SK-N-SH (cell line): ENCODE measurements at regions of chr11 and their contacts with region 1.

Region 1: DNA sequence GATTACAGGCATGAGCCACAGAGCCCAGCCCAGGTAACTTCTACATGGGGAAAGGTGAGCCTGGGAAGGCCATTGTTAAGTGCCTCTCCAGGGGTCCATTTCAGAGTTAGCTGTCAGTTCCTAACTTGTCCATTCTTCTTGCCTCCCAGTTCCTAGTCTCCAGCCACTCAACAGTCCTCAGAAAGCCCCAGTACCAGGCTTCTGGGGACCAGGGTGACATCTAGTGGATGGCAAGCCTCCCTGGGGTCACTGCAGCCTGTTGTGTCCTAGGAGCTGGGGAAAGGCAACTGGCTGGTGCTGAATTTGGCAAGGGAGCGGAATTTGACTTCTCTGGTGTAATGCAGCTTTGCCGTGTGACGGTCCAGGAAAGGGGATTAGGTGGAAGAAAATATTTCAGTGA is 2.1 kb downstream of the LGALS12 start:
- DNase-seq: peak; percentile 37
- H3K4me3 ChIP-seq: no peak overlapping the region
- H3K27ac ChIP-seq: no peak overlapping the region
- H3K4me1 ChIP-seq: peaks cover 0 to 3% of the 10 kb centered on the region in 2 experiments; a peak in 1 of 4 replicates
- H3K27me3 ChIP-seq: no peaks in the 10 kb centered on the region; the same call in 1 of the 2 replicates
- CTCF ChIP-seq: peak; percentile 27
- EP300 ChIP-seq: no peak
- RAD21 ChIP-seq: peak; percentile 37; the same call in 1 of the 2 replicates

Region 2: GRCh38 chr11:63448646-63449045 is 59.4 kb before region 1 on chr11:
- CTCF ChIA-PET with region 1: no interaction called
- POLR2A ChIA-PET with region 1: no interaction called
- DNase-seq: no peak
- H3K4me3 ChIP-seq: no peak overlapping the region
- H3K27ac ChIP-seq: no peak overlapping the region
- H3K4me1 ChIP-seq: no peaks in the 10 kb centered on the region
- H3K27me3 ChIP-seq: peaks cover 19% of the 10 kb centered on the region; the same call in 1 of the 2 replicates
- CTCF ChIP-seq: no peak
- EP300 ChIP-seq: no peak
- RAD21 ChIP-seq: no peak

Region 3: GRCh38 chr11:63520606-63521170 is 12.7 kb after region 1 on chr11:
- CTCF ChIA-PET with region 1: interaction called, 10 read pairs
- POLR2A ChIA-PET with region 1: no interaction called
- DNase-seq: no peak
- H3K4me3 ChIP-seq: no peak overlapping the region
- H3K27ac ChIP-seq: no peak overlapping the region
- H3K4me1 ChIP-seq: no peaks in the 10 kb centered on the region
- H3K27me3 ChIP-seq: no peaks in the 10 kb centered on the region
- CTCF ChIP-seq: no peak
- EP300 ChIP-seq: no peak
- RAD21 ChIP-seq: no peak

Region 4: GRCh38 chr11:63536669-63537292 is 28.8 kb after region 1 on chr11 and contains the start of gene PLAAT4:
- CTCF ChIA-PET with region 1: no interaction called
- POLR2A ChIA-PET with region 1: no interaction called
- DNase-seq: no peak
- H3K4me3 ChIP-seq: peak within 1 kb of the TSS in 1 of 2 experiments; percentile 10; a peak in 1 of 4 replicates
- H3K27ac ChIP-seq: peak within 1 kb of the TSS in 1 of 2 experiments; percentile 12; a peak in 1 of 4 replicates
- H3K4me1 ChIP-seq: peaks cover 0 to 16% of the 10 kb centered on the region in 2 experiments; a peak in 1 of 4 replicates
- H3K27me3 ChIP-seq: no peaks in the 10 kb centered on the region
- CTCF ChIP-seq: no peak
- EP300 ChIP-seq: no peak
- RAD21 ChIP-seq: no peak
- polyA plus RNA-seq, gene PLAAT4: 4.6 and 5.6 TPM in 2 replicates